Activated B cell treated with CpG ODN at 0.5 μM for 24 hours (primary cell): ENCODE measurements at regions of chr3 and their contacts with region 1.

Region 1: GRCh38 chr3:159964166-159964973 is 24.3 kb upstream of the IL12A start:
- DNase-seq: no peak
- ATAC-seq: peak; percentile 89
- H3K4me3 Mint-ChIP-seq: peak overlapping the region; percentile 66
- H3K27ac Mint-ChIP-seq: peak overlapping the region; percentile 90
- H3K4me1 Mint-ChIP-seq: peaks cover 15% of the 10 kb centered on the region
- H3K27me3 Mint-ChIP-seq: no peaks in the 10 kb centered on the region
- CTCF ChIP-seq: no peak

Region 2: DNA sequence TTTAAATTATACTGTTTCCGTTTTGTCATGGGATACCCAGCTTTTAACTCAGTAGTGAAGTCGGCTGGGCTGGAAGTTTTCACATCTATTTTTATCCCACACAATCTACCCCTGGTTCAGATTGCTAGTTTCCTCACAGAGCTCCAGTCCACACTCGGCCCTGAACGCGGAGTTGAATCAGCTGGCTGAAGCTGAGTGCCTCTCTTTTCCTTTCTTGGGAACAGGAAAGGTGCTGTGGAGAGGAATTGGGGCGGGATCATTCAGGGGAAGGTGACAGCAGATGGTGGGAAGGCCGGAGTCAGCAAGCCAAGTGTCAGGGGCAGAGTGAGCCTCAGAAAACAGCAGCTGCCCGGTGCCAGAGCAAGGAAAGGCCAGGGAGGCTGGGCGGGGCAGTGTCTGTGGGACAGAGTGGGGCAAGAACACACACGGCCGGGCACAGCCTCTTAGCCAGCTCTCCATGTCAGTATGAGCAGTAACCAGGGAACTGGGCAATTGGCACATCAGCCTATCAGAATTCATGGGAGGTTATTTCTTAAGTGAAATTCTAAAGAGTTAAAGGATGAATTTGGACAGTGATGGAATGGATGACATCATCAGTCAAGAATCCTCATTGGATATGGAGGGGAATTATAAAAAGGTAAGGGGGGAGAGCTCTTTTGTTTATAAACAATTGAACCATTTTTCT is 111.4 kb before region 1 on chr3:
- CTCF ChIA-PET with region 1: no interaction called
- POLR2A ChIA-PET with region 1: no interaction called
- intact Hi-C with region 1: no loop called
- DNase-seq: no peak
- ATAC-seq: no peak
- H3K4me3 Mint-ChIP-seq: no peak overlapping the region
- H3K27ac Mint-ChIP-seq: no peak overlapping the region
- H3K4me1 Mint-ChIP-seq: peaks cover 11% of the 10 kb centered on the region
- H3K27me3 Mint-ChIP-seq: peaks cover 10% of the 10 kb centered on the region
- CTCF ChIP-seq: no peak

Region 3: GRCh38 chr3:159902546-159903314 is 61.6 kb before region 1 on chr3:
- CTCF ChIA-PET with region 1: no interaction called
- POLR2A ChIA-PET with region 1: interaction called, 18 read pairs
- intact Hi-C with region 1: loop called (anchors 1 kb)
- DNase-seq: no peak
- ATAC-seq: peak; percentile 59
- H3K4me3 Mint-ChIP-seq: no peak overlapping the region
- H3K27ac Mint-ChIP-seq: peak overlapping the region; percentile 63
- H3K4me1 Mint-ChIP-seq: peaks cover 25% of the 10 kb centered on the region
- H3K27me3 Mint-ChIP-seq: no peaks in the 10 kb centered on the region
- CTCF ChIP-seq: no peak